ENCODE measurements at regions of chr22 and their contacts with region 1.

Region 1: GRCh38 chr22:27880778-27881394 is 38.2 kb downstream of the PITPNB start:
- DNase-seq: peak in 2 of 4 donors; percentile 72 to 82
- ATAC-seq: peak; percentile 91
- H3K4me3 ChIP-seq: no peak overlapping the region
- H3K27ac ChIP-seq: peak overlapping the region in 1 of 2 donors; percentile 27
- H3K4me1 ChIP-seq: peaks cover 0 to 27% of the 10 kb centered on the region in 2 donors
- H3K27me3 ChIP-seq: no peaks in the 10 kb centered on the region
- CTCF ChIP-seq: peak; percentile 64 to 82

Region 2: GRCh38 chr22:27810609-27811151 is 70.2 kb before region 1 on chr22:
- intact Hi-C with region 1: no loop called
- DNase-seq: peak in 3 of 4 donors; percentile 47 to 71 (median 57)
- ATAC-seq: peak; percentile 70
- H3K4me3 ChIP-seq: no peak overlapping the region
- H3K27ac ChIP-seq: no peak overlapping the region
- H3K4me1 ChIP-seq: peaks cover 7% of the 10 kb centered on the region in 2 donors
- H3K27me3 ChIP-seq: no peaks in the 10 kb centered on the region
- CTCF ChIP-seq: no peak

Region 3: GRCh38 chr22:28009272-28009827 is 128.5 kb after region 1 on chr22:
- intact Hi-C with region 1: loop called (anchors 5 to 10 kb)
- DNase-seq: peak; percentile 68 to 88 (median 83)
- ATAC-seq: peak; percentile 94
- H3K4me3 ChIP-seq: no peak overlapping the region
- H3K27ac ChIP-seq: no peak overlapping the region
- H3K4me1 ChIP-seq: peaks cover 0 to 4% of the 10 kb centered on the region in 2 donors
- H3K27me3 ChIP-seq: no peaks in the 10 kb centered on the region
- CTCF ChIP-seq: peak; percentile 91

Measured in left lung (tissue), 14 donors.